Right cardiac atrium (tissue), 5 donors: ENCODE measurements at regions of chr3 and their contacts with region 1.

Region 1: DNA sequence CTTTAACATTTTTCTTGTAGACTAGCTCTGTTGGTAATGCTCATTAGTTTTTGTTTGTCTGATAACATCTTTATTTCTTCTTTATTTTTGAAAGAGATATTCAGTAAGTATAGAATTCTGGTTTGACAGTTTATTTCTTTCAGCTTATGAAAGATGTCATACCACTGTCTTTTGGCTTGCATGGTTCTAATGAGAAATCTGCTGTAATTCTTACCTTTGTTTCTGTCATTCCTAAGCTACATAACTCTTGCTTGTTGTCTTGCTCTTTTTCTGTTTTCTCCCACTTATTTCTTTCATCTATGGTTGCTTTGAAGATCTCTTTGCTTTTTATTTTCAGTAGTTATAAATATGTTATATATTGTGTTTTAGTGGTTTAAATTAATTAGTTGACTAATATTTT is 87.2 kb upstream of the PEX5L start:
- DNase-seq: no peak
- ATAC-seq: no peak
- H3K4me3 ChIP-seq: no peak overlapping the region
- H3K27ac ChIP-seq: no peak overlapping the region
- H3K4me1 ChIP-seq: no peaks in the 10 kb centered on the region
- H3K27me3 ChIP-seq: no peaks in the 10 kb centered on the region

Region 2: GRCh38 chr3:180188512-180189309 is 64.8 kb after region 1 on chr3:
- intact Hi-C with region 1: no loop called
- DNase-seq: no peak
- ATAC-seq: no peak
- H3K4me3 ChIP-seq: no peak overlapping the region
- H3K27ac ChIP-seq: no peak overlapping the region
- H3K4me1 ChIP-seq: no peaks in the 10 kb centered on the region
- H3K27me3 ChIP-seq: no peaks in the 10 kb centered on the region

Region 3: GRCh38 chr3:180563406-180563805 is 439.5 kb after region 1 on chr3:
- intact Hi-C with region 1: loop called in 1 of 4 experiments (anchors 5 kb)
- DNase-seq: no peak
- ATAC-seq: no peak
- H3K4me3 ChIP-seq: no peak overlapping the region
- H3K27ac ChIP-seq: no peak overlapping the region
- H3K4me1 ChIP-seq: no peaks in the 10 kb centered on the region
- H3K27me3 ChIP-seq: no peaks in the 10 kb centered on the region

Region 4: GRCh38 chr3:180700941-180701340 is 577.0 kb after region 1 on chr3:
- intact Hi-C with region 1: no loop called
- DNase-seq: no peak
- ATAC-seq: peak; percentile 50 to 51
- H3K4me3 ChIP-seq: no peak overlapping the region
- H3K27ac ChIP-seq: no peak overlapping the region
- H3K4me1 ChIP-seq: no peaks in the 10 kb centered on the region
- H3K27me3 ChIP-seq: no peaks in the 10 kb centered on the region